Heart left ventricle (tissue), 16 donors: ENCODE measurements at regions of chr2 and their contacts with region 1.

Region 1: GRCh38 chr2:60104514-60105505 is 448.6 kb downstream of the BCL11A start:
- DNase-seq: no peak
- ATAC-seq: no peak
- H3K4me3 ChIP-seq: no peak overlapping the region
- H3K27ac ChIP-seq: no peak overlapping the region
- H3K4me1 ChIP-seq: peaks cover 0 to 10% (median 0%) of the 10 kb centered on the region in 12 donors
- H3K27me3 ChIP-seq: no peaks in the 10 kb centered on the region
- CTCF ChIP-seq: no peak
- POLR2A ChIP-seq: no peak

Region 2: DNA sequence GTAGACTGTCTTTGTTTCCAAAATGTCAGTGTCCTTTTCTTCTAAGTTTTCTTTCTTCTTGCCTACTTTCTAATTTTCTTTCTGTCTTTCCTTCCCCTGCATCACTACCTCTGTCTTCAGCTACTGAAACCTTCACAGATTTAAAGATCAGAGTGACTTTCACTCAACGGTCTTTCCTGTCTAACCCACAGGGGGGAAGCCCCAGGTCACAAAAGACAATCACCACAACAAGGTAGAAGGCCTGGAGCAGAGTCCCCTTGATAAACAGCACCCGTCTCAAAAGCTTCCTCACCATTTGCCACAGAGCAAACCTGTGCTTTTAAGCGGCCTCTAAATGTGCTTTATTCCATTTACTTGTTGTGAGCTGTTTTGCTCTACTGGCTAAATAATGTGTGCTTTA is 216.8 kb before region 1 on chr2:
- intact Hi-C with region 1: loop called in 1 of 10 experiments (anchors 5 kb)
- DNase-seq: no peak
- ATAC-seq: no peak
- H3K4me3 ChIP-seq: no peak overlapping the region
- H3K27ac ChIP-seq: no peak overlapping the region
- H3K4me1 ChIP-seq: peaks cover 0 to 8% (median 0%) of the 10 kb centered on the region in 12 donors
- H3K27me3 ChIP-seq: no peaks in the 10 kb centered on the region
- CTCF ChIP-seq: no peak
- POLR2A ChIP-seq: no peak

Region 3: GRCh38 chr2:59900728-59901452 is 203.9 kb before region 1 on chr2:
- intact Hi-C with region 1: loop called in 1 of 10 experiments (anchors 5 kb)
- DNase-seq: peak in 1 of 5 donors; percentile 16
- ATAC-seq: peak; percentile 78 to 92 (median 88)
- H3K4me3 ChIP-seq: no peak overlapping the region
- H3K27ac ChIP-seq: peak overlapping the region in 5 of 12 donors; percentile 10 to 48 (median 35)
- H3K4me1 ChIP-seq: peaks cover 0 to 5% (median 0%) of the 10 kb centered on the region in 12 donors
- H3K27me3 ChIP-seq: no peaks in the 10 kb centered on the region
- CTCF ChIP-seq: no peak
- POLR2A ChIP-seq: no peak

Region 4: GRCh38 chr2:59912042-59912441 is 192.8 kb before region 1 on chr2:
- intact Hi-C with region 1: no loop called
- DNase-seq: no peak
- ATAC-seq: no peak
- H3K4me3 ChIP-seq: no peak overlapping the region
- H3K27ac ChIP-seq: no peak overlapping the region
- H3K4me1 ChIP-seq: no peaks in the 10 kb centered on the region
- H3K27me3 ChIP-seq: peaks cover 0 to 9% (median 0%) of the 10 kb centered on the region in 9 donors
- CTCF ChIP-seq: no peak
- POLR2A ChIP-seq: no peak

Region 5: GRCh38 chr2:59947917-59948541 is 156.8 kb before region 1 on chr2:
- intact Hi-C with region 1: no loop called
- DNase-seq: no peak
- ATAC-seq: no peak
- H3K4me3 ChIP-seq: no peak overlapping the region
- H3K27ac ChIP-seq: no peak overlapping the region
- H3K4me1 ChIP-seq: no peaks in the 10 kb centered on the region
- H3K27me3 ChIP-seq: peaks cover 0 to 10% (median 0%) of the 10 kb centered on the region in 9 donors
- CTCF ChIP-seq: no peak
- POLR2A ChIP-seq: no peak

Region 6: GRCh38 chr2:60312618-60313017 is 207.8 kb after region 1 on chr2:
- intact Hi-C with region 1: no loop called
- DNase-seq: no peak
- ATAC-seq: no peak
- H3K4me3 ChIP-seq: no peak overlapping the region
- H3K27ac ChIP-seq: no peak overlapping the region
- H3K4me1 ChIP-seq: peaks cover 0 to 9% (median 0%) of the 10 kb centered on the region in 12 donors
- H3K27me3 ChIP-seq: no peaks in the 10 kb centered on the region
- CTCF ChIP-seq: no peak
- POLR2A ChIP-seq: no peak